Posterior vena cava (tissue), 2 donors: ENCODE measurements at regions of chr7 and their contacts with region 1.

Region 1: GRCh38 chr7:132489776-132490237 is 86.5 kb downstream of the PLXNA4 start:
- DNase-seq: no peak

Region 2: DNA sequence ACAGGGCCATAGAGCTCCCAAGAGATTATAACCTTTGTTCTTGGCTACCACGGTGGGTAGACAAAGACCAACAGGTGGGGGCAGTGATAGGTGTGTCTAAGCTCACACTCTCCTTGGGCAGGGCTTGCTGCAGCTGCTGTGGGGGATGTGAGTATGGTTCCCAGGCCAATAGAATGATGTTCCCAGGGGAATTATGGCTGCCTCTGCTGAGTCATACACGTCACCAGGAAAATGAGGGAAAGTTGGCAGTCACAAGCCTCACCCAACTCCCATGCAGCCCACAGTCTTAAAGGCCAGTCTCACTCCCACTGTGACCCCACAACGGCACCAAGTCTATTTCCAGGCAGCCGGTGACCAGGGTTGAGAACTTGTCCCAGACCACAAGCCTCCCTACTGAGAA is 480.0 kb before region 1 on chr7:
- intact Hi-C with region 1: no loop called
- DNase-seq: no peak

Region 3: GRCh38 chr7:132394283-132395198 is 95.3 kb before region 1 on chr7:
- intact Hi-C with region 1: loop called in 1 of 2 experiments (anchors 10 kb)
- DNase-seq: peak; percentile 34